ENCODE measurements at regions of chr12 and their contacts with region 1.

Region 1: GRCh38 chr12:64352181-64352580 is 38.4 kb downstream of the C12orf56 start:
- DNase-seq: no peak
- ATAC-seq: no peak
- H3K4me3 ChIP-seq: no peak overlapping the region
- H3K27ac ChIP-seq: no peak overlapping the region
- H3K4me1 ChIP-seq: no peaks in the 10 kb centered on the region
- H3K27me3 ChIP-seq: no peaks in the 10 kb centered on the region
- CTCF ChIP-seq: no peak; the same call in 1 of the 2 replicates

Region 2: DNA sequence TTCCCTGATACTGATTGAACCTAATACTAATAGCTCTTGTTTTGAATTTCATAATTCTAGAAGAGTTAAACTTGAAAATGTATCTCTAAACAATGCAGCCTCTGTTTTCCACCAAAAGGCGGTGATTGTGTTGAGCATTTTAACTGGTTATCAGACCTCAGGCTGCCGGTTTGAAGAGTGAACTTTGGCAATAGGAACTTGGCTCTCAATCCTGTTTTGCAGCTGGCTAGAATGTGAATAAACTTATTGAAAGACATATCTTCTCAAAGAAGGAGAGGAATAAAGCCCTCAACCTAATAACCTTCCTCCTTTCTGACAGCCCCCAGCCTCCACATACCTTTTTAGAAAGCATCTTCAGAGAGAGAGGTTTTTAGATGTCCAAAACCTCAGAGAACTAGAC is 402.3 kb before region 1 on chr12:
- CTCF ChIA-PET with region 1: no interaction called
- POLR2A ChIA-PET with region 1: interaction called, 12 read pairs
- intact Hi-C with region 1: no loop called
- DNase-seq: no peak
- ATAC-seq: no peak
- H3K4me3 ChIP-seq: no peak overlapping the region
- H3K27ac ChIP-seq: no peak overlapping the region
- H3K4me1 ChIP-seq: no peaks in the 10 kb centered on the region
- H3K27me3 ChIP-seq: no peaks in the 10 kb centered on the region
- CTCF ChIP-seq: no peak

Region 3: GRCh38 chr12:64332938-64333337 is 19.2 kb before region 1 on chr12:
- CTCF ChIA-PET with region 1: interaction called, 10 read pairs
- POLR2A ChIA-PET with region 1: no interaction called
- intact Hi-C with region 1: no loop called
- DNase-seq: peak; percentile 10
- ATAC-seq: no peak
- H3K4me3 ChIP-seq: no peak overlapping the region
- H3K27ac ChIP-seq: no peak overlapping the region
- H3K4me1 ChIP-seq: no peaks in the 10 kb centered on the region
- H3K27me3 ChIP-seq: no peaks in the 10 kb centered on the region
- CTCF ChIP-seq: no peak

Region 4: DNA sequence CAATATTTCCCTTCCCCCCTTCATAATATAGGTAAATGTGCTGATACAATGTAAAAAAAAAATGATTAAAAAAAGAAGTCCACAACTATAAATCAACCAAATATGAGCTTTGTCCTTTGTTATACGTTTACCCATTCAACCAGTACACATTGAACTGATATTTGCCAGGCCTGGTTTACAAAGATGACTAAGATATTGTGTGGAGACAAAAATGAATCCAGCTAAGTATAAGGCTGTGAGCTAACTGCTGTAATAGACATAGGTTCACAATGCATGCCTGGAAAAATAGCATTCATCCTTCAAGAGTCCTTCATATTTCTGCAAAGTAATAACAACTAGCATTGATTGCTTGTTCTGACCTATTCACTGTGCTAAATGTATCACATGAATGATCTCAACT is 31.5 kb after region 1 on chr12:
- CTCF ChIA-PET with region 1: no interaction called
- POLR2A ChIA-PET with region 1: no interaction called
- intact Hi-C with region 1: no loop called
- DNase-seq: peak; percentile 58
- ATAC-seq: peak; percentile 63
- H3K4me3 ChIP-seq: no peak overlapping the region
- H3K27ac ChIP-seq: peak overlapping the region; percentile 12; the same call in 1 of the 2 replicates
- H3K4me1 ChIP-seq: peaks cover 41% of the 10 kb centered on the region
- H3K27me3 ChIP-seq: no peaks in the 10 kb centered on the region
- CTCF ChIP-seq: no peak